ENCODE measurements at regions of chr16 and their contacts with region 1.

Region 1: GRCh38 chr16:30947859-30948666 is 805 bp upstream of the ORAI3 start:
- DNase-seq: peak; percentile 99
- ATAC-seq: peak; percentile 88
- H3K4me3 Mint-ChIP-seq: peak overlapping the region; percentile 76
- H3K27ac Mint-ChIP-seq: peak overlapping the region; percentile 93
- H3K4me1 Mint-ChIP-seq: peaks cover 22% of the 10 kb centered on the region
- H3K27me3 Mint-ChIP-seq: no peaks in the 10 kb centered on the region
- CTCF ChIP-seq: no peak

Region 2: DNA sequence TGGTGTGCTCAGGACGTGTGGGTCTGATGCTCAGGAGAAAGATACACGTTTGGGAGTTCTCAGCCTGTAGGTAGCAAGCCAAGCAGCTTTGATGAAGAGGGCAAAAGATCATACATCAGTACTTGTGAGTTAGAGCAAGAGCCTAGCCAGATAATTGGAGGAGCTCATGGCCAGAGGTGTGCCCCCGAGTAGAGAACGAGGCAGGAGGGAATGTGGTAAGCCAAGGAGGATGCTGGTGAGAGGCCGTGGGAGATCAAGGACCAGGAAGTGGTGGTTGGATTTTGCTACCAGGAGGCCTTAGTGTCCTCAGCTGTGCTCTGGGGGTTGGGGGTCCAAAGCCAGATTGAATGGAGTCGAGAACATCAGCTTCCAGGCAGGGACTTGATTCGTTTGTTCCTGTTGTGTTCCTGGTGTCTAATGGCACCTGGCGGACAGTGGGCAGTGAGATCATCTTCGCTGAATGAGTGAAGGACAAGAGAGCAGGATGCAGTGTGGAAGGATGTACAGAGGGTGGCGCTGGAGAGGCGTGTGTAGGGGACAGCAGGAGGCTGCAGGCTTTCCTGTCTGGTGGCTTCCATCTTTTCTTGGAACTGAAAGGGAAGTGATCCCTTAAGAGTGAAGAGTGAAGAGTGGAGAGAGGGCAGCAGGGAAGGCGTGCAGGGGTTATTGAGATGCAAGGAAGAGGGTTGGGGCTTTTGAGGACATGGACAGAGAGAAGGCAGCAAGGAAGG is 13.1 kb before region 1 on chr16:
- CTCF ChIA-PET with region 1: interaction called, 54 read pairs
- POLR2A ChIA-PET with region 1: no interaction called
- DNase-seq: peak; percentile 82
- ATAC-seq: peak; percentile 97
- H3K4me3 Mint-ChIP-seq: no peak overlapping the region
- H3K27ac Mint-ChIP-seq: peak overlapping the region; percentile 54
- H3K4me1 Mint-ChIP-seq: no peaks in the 10 kb centered on the region; the same call in 1 of the 2 replicates
- H3K27me3 Mint-ChIP-seq: no peaks in the 10 kb centered on the region
- CTCF ChIP-seq: peak; percentile 75

Measured in WTC11 (cell line).